ENCODE measurements at regions of chr16 and their contacts with region 1.

Region 1: GRCh38 chr16:28846080-28846932 is at the start of gene TUFM:
- H3K4me3 ChIP-seq: peak within 1 kb of the TSS; percentile 95
- H3K27ac ChIP-seq: peak within 1 kb of the TSS; percentile 65
- H3K4me1 ChIP-seq: no peaks in the 10 kb centered on the region
- CTCF ChIP-seq: peak; percentile 97

Region 2: GRCh38 chr16:28823872-28824716 is 22.2 kb before region 1 on chr16:
- CTCF ChIA-PET with region 1: interaction called, 5 read pairs
- POLR2A ChIA-PET with region 1: interaction called, 39 read pairs
- H3K4me3 ChIP-seq: peak overlapping the region; percentile 89
- H3K27ac ChIP-seq: peak overlapping the region; percentile 99
- H3K4me1 ChIP-seq: peaks cover 6% of the 10 kb centered on the region; the same call in 1 of the 2 replicates
- CTCF ChIP-seq: peak; percentile 92

Region 3: GRCh38 chr16:28879841-28880588 is 33.7 kb after region 1 on chr16:
- CTCF ChIA-PET with region 1: interaction called, 7 read pairs
- POLR2A ChIA-PET with region 1: interaction called, 13 read pairs
- H3K4me3 ChIP-seq: peak overlapping the region; percentile 62
- H3K27ac ChIP-seq: peak overlapping the region; percentile 67; the same call in 1 of the 2 replicates
- H3K4me1 ChIP-seq: peaks cover 11% of the 10 kb centered on the region
- CTCF ChIP-seq: peak; percentile 6; the same call in 1 of the 2 replicates

Region 4: GRCh38 chr16:28891964-28892890 is 45.9 kb after region 1 on chr16:
- CTCF ChIA-PET with region 1: no interaction called
- POLR2A ChIA-PET with region 1: no interaction called
- H3K4me3 ChIP-seq: no peak overlapping the region
- H3K27ac ChIP-seq: no peak overlapping the region
- H3K4me1 ChIP-seq: no peaks in the 10 kb centered on the region
- CTCF ChIP-seq: no peak